Mammary epithelial cell (primary cell): ENCODE measurements at regions of chr6 and their contacts with region 1.

Region 1: DNA sequence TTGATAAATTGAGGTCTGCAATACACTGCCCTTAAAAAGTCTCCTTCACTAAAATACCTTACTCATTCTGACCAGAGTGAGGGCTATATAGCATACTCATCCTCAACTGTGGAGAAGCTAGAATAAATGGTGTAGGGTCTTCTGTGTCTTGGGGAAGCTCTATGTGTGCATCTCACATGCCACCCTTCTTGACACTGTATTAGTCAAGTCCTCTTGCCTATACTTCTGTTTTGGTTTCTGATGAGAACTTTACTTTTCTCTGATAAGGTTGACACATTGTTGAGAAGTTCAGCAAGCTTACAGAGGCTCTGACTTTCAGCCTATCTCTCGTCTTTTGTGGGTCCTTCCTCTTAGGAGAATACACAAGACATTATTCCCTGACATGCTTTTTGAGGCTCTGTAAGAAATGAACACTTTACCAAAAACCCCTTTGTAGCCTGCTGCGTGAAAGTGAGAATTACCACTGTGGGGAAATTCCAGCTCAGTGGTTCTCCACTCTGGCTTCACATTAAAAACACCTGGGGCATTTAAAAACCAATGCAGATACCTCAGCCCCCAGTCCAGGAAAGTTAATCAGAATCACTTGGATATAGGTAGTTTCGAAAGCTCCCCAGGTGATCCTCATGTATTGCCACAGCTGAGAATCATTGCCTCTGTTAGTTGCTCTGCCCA is 372.1 kb upstream of the HS3ST5 start:
- DNase-seq: no peak
- H3K4me3 ChIP-seq: no peak overlapping the region
- H3K27ac ChIP-seq: no peak overlapping the region
- H3K4me1 ChIP-seq: no peaks in the 10 kb centered on the region
- H3K27me3 ChIP-seq: no peaks in the 10 kb centered on the region
- CTCF ChIP-seq: no peak

Region 2: GRCh38 chr6:114634016-114634415 is 81.0 kb before region 1 on chr6:
- CTCF ChIA-PET with region 1: no interaction called
- dilution Hi-C with region 1: loop called (anchors 5 kb)
- in situ Hi-C with region 1: no loop called
- intact Hi-C with region 1: no loop called
- DNase-seq: no peak
- H3K4me3 ChIP-seq: no peak overlapping the region
- H3K27ac ChIP-seq: no peak overlapping the region
- H3K4me1 ChIP-seq: no peaks in the 10 kb centered on the region
- H3K27me3 ChIP-seq: no peaks in the 10 kb centered on the region
- CTCF ChIP-seq: no peak

Region 3: GRCh38 chr6:114648847-114649246 is 66.1 kb before region 1 on chr6:
- CTCF ChIA-PET with region 1: no interaction called
- dilution Hi-C with region 1: no loop called
- in situ Hi-C with region 1: no loop called
- intact Hi-C with region 1: no loop called
- DNase-seq: no peak
- H3K4me3 ChIP-seq: no peak overlapping the region
- H3K27ac ChIP-seq: no peak overlapping the region
- H3K4me1 ChIP-seq: no peaks in the 10 kb centered on the region
- H3K27me3 ChIP-seq: no peaks in the 10 kb centered on the region
- CTCF ChIP-seq: no peak

Region 4: GRCh38 chr6:114764866-114765265 is 49.9 kb after region 1 on chr6:
- CTCF ChIA-PET with region 1: no interaction called
- dilution Hi-C with region 1: no loop called
- in situ Hi-C with region 1: no loop called
- intact Hi-C with region 1: no loop called
- DNase-seq: no peak
- H3K4me3 ChIP-seq: no peak overlapping the region
- H3K27ac ChIP-seq: no peak overlapping the region
- H3K4me1 ChIP-seq: no peaks in the 10 kb centered on the region
- H3K27me3 ChIP-seq: no peaks in the 10 kb centered on the region
- CTCF ChIP-seq: no peak

Region 5: DNA sequence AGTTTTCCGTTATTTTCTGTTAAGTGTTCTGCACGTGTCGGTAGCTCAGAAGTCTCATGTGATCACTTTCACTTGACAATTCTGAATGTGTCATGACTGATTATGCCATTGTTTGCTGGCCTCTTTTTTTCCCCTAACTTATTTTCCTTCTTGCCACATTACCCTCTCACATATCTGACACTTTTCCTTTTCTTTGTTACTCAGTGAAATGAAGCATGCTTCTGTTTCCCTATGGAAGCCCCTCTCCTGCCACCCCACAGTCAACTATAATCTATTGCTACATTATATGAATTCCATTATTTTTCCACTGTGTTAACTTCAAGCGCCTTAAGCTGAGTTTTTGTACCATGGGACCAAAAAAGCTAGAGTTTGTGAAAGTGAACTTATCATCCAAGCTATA is 159.4 kb after region 1 on chr6:
- CTCF ChIA-PET with region 1: no interaction called
- dilution Hi-C with region 1: no loop called
- in situ Hi-C with region 1: no loop called
- intact Hi-C with region 1: no loop called
- DNase-seq: no peak
- H3K4me3 ChIP-seq: no peak overlapping the region
- H3K27ac ChIP-seq: no peak overlapping the region
- H3K4me1 ChIP-seq: no peaks in the 10 kb centered on the region
- H3K27me3 ChIP-seq: no peaks in the 10 kb centered on the region
- CTCF ChIP-seq: no peak